ENCODE measurements at regions of chr19 and their contacts with region 1.

Region 1: DNA sequence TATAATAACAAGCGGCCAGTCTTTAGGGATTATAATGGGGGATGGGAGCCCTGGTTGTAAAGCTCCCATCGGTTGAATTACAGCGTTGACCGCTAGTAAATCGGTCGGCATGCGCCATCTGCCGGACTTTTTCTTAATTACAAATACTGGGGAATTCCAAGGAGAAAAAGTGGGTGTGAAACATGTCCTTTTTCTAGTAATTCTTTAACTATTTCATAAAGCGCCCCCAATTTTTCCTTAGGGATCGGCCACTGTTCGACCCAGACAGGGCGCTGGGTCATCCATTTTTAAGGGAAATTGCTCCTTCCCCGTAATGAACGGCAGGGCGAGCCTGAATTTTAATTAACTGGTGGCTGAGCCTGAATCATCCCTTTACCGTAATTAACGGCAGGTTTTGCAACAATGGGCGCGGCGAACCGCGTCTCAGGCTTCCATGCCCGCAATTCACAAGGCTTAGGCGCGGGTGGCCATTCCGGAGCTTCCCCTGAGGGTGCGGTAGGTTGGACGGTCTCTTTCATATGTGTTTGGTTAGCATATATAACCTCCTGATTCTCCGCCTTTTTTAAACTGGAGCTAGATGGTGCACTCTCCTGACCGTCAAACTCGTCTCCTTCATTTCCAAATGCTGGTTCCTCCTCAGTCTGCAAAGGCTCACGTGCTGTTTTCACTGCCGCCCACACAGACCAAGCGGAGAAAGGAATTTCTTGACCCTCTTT is 30.2 kb upstream of the EVI5L start:
- DNase-seq: peak; percentile 76
- ATAC-seq: peak; percentile 81
- H3K4me3 ChIP-seq: peak overlapping the region; percentile 30 to 52
- H3K27ac ChIP-seq: no peak overlapping the region
- H3K4me1 ChIP-seq: peaks cover 11 to 22% of the 10 kb centered on the region in 2 experiments; a peak in 3 of 4 replicates
- H3K27me3 ChIP-seq: no peaks in the 10 kb centered on the region
- CTCF ChIP-seq: peak; percentile 52 to 88 (median 60); a peak in 5 of 6 replicates
- POLR2A ChIP-seq: no peak
- RAD21 ChIP-seq: peak; percentile 77

Region 2: GRCh38 chr19:7349961-7350711 is 449.7 kb before region 1 on chr19:
- CTCF ChIA-PET with region 1: interaction called, 23 read pairs
- POLR2A ChIA-PET with region 1: interaction called, 3 read pairs
- RAD21 ChIA-PET with region 1: no interaction called
- intact Hi-C with region 1: loop called (anchors 1 kb)
- DNase-seq: no peak
- ATAC-seq: no peak
- H3K4me3 ChIP-seq: no peak overlapping the region
- H3K27ac ChIP-seq: no peak overlapping the region
- H3K4me1 ChIP-seq: peaks cover 2 to 15% of the 10 kb centered on the region in 2 experiments; a peak in 3 of 4 replicates
- H3K27me3 ChIP-seq: no peaks in the 10 kb centered on the region
- CTCF ChIP-seq: no peak
- POLR2A ChIP-seq: no peak
- RAD21 ChIP-seq: no peak

Region 3: DNA sequence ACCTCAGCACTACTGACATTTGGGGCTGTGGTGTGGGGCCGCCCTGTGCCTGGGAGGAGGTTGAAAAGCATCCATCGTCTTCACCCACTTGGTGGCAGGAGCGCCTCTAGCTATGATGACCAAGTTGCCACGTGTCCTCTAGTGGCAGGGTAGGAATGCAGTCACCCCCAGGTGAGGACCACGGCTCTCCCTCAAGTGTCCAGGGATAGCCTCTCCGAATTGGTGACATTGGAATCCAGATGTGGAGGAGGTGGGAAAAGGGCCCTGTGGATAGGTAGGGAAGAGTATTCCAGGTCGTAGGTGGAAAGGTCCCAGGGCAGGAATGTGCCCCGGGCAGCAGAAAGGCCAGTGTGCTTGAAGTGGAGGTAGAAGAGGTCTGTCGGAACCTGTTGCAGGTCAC is 413.5 kb before region 1 on chr19:
- CTCF ChIA-PET with region 1: interaction called, 5 read pairs
- POLR2A ChIA-PET with region 1: no interaction called
- RAD21 ChIA-PET with region 1: no interaction called
- intact Hi-C with region 1: loop called (anchors 10 kb)
- DNase-seq: no peak
- ATAC-seq: peak; percentile 84
- H3K4me3 ChIP-seq: no peak overlapping the region
- H3K27ac ChIP-seq: no peak overlapping the region
- H3K4me1 ChIP-seq: peaks cover 21 to 24% of the 10 kb centered on the region in 2 experiments
- H3K27me3 ChIP-seq: no peaks in the 10 kb centered on the region
- CTCF ChIP-seq: peak; percentile 26 to 81 (median 47); a peak in 5 of 6 replicates
- POLR2A ChIP-seq: no peak
- RAD21 ChIP-seq: peak; percentile 85

Region 4: DNA sequence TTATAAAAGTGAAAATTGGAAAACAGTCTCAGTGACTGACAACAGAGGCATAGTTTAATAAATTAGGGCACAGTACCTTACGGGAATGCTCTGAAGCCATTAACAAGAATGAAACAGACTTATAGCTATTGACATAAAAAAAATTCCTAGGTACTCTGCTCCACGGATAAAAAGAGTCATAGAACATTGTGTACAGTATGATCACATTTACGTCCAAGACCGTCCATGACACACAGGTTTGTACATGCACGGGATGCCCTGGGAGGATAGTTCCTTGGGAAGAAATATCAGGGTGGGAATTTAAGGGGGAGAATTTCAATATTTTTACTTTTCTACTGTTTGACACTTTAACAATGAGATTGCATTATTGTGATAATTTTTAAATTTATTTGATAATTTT is 229.0 kb before region 1 on chr19:
- CTCF ChIA-PET with region 1: interaction called, 88 read pairs
- POLR2A ChIA-PET with region 1: interaction called, 7 read pairs
- RAD21 ChIA-PET with region 1: interaction called, 16 to 28 read pairs
- intact Hi-C with region 1: loop called (anchors 1 kb)
- DNase-seq: no peak
- ATAC-seq: no peak
- H3K4me3 ChIP-seq: no peak overlapping the region
- H3K27ac ChIP-seq: no peak overlapping the region
- H3K4me1 ChIP-seq: peaks cover 14 to 26% of the 10 kb centered on the region in 2 experiments
- H3K27me3 ChIP-seq: no peaks in the 10 kb centered on the region
- CTCF ChIP-seq: no peak
- POLR2A ChIP-seq: no peak
- RAD21 ChIP-seq: no peak

Region 5: DNA sequence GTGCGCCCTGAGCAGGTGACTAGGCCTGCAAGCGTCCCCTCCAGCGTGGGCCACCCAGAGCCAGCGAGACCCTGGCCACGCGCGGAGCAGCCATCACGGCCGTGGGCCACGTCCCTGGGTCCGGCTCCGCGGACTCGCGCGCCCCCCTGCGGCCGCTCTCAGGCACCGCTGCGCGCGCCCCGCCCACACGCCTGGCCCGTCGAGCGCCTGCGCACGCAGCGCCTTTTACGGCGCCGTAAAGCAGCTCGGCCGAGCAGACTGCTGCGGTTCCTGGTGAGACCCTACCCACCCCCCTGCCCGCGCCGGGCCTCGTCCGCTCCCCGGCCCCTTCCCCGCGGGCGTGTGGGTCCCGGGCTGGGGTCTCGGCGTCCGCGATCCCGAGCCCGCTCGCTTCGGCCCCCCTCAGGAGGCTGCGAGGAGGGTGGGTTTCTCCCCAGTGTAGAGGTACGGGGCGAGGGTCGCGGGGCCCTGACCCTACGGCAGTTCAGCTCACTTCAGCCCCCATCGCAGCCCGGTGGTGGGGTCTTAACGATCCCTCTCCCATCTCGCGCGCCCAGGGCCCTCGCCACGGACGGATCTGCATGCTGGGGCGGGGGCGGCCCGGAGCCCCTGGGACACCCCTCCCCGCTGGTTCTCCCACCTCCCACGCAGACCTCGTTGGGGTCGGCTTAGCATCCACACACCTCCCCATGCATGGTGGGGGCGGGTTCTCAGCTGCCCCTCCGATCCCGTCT is 119.0 kb before region 1 on chr19 and contains the start of gene TRAPPC5:
- CTCF ChIA-PET with region 1: interaction called, 32 read pairs
- POLR2A ChIA-PET with region 1: interaction called, 10 read pairs
- RAD21 ChIA-PET with region 1: interaction called, 6 to 12 read pairs
- intact Hi-C with region 1: loop called (anchors 1 kb)
- DNase-seq: peak; percentile 58
- ATAC-seq: peak; percentile 72
- H3K4me3 ChIP-seq: peak within 1 kb of the TSS; percentile 95
- H3K27ac ChIP-seq: peak within 1 kb of the TSS; percentile 96
- H3K4me1 ChIP-seq: peaks cover 3 to 26% of the 10 kb centered on the region in 2 experiments
- H3K27me3 ChIP-seq: no peaks in the 10 kb centered on the region
- CTCF ChIP-seq: peak; percentile 55 to 84 (median 79)
- POLR2A ChIP-seq: peak; percentile 52
- RAD21 ChIP-seq: peak; percentile 90
- total RNA-seq, gene TRAPPC5: 101 TPM

Measured in HCT116 (cell line).